Common myeloid progenitor, CD34-positive (primary cell): ENCODE measurements at regions of chr3 and their contacts with region 1.

Region 1: GRCh38 chr3:140128631-140129030 is 193.6 kb downstream of the CLSTN2 start:
- DNase-seq: peak; percentile 27 to 61 (median 44)
- H3K4me3 ChIP-seq: peak overlapping the region in 1 of 7 experiments; percentile 11
- H3K27ac ChIP-seq: peak overlapping the region in 1 of 2 experiments; percentile 12
- H3K4me1 ChIP-seq: peaks cover 0 to 23% (median 8%) of the 10 kb centered on the region in 4 experiments
- H3K27me3 ChIP-seq: no peaks in the 10 kb centered on the region

Region 2: GRCh38 chr3:139157161-139157932 is 971.3 kb before region 1 on chr3:
- CTCF ChIA-PET with region 1: no interaction called
- POLR2A ChIA-PET with region 1: no interaction called
- DNase-seq: no peak
- H3K4me3 ChIP-seq: no peak overlapping the region
- H3K27ac ChIP-seq: no peak overlapping the region
- H3K4me1 ChIP-seq: no peaks in the 10 kb centered on the region
- H3K27me3 ChIP-seq: peaks cover 0 to 10% (median 2%) of the 10 kb centered on the region in 5 experiments

Region 3: GRCh38 chr3:140117096-140117526 is 11.5 kb before region 1 on chr3:
- CTCF ChIA-PET with region 1: interaction called, 10 read pairs
- POLR2A ChIA-PET with region 1: no interaction called
- DNase-seq: no peak
- H3K4me3 ChIP-seq: no peak overlapping the region
- H3K27ac ChIP-seq: no peak overlapping the region
- H3K4me1 ChIP-seq: no peaks in the 10 kb centered on the region
- H3K27me3 ChIP-seq: peaks cover 0 to 5% (median 0%) of the 10 kb centered on the region in 5 experiments

Region 4: DNA sequence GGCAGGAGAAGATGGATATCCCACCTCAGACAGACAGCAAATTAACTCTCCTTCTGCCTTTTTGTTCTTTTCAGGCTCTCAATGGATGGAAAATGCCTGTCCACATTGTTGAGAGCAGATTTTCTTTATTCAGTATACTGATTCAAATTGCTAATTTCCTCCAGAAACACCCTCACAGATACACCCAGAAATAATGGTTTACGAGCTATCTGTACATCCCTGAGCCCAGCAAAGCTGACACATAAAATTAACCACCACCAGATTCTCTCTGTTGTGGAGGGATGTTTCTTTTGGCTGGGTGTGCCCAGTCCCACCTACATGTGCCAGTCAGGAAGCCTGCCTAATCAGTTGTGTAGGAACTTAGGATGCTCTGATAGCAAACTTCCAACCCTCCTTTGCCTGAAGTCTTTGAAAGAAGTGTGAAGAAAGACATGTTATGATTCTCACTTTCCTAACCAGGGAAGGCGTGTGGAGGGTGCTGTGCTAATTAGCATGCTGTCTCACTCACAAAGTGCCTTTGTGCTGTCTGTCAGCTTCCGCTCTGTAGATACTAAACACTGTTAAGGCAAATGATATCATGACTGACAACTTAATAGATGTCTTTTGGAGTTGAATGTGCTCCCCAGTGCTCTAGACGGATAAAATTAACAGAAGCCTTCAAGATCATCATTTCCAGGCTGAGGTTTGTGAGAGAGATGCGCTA is 14.9 kb after region 1 on chr3:
- CTCF ChIA-PET with region 1: interaction called, 13 read pairs
- POLR2A ChIA-PET with region 1: no interaction called
- DNase-seq: no peak
- H3K4me3 ChIP-seq: no peak overlapping the region
- H3K27ac ChIP-seq: no peak overlapping the region
- H3K4me1 ChIP-seq: no peaks in the 10 kb centered on the region
- H3K27me3 ChIP-seq: no peaks in the 10 kb centered on the region

Region 5: DNA sequence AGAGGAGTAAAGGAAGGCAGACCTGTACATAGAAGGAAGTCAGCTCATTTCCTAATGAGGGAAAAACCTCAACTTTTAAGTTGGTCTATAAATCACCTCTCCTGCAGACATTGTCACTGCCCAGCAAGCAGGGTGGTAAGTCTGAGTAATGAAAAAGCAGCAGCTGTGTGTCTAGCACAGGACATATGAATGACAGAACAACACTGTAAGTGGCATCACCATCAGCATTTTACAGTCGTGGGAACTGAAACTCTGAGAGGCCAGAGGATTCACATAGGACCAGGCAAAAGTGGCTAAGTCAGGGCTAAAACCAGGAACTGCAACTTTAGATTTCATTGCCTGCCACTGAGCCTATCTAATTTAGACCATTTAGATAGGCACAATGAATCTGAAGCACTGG is 42.0 kb after region 1 on chr3:
- CTCF ChIA-PET with region 1: no interaction called
- POLR2A ChIA-PET with region 1: no interaction called
- DNase-seq: peak in 2 of 3 donors; percentile 24 to 25
- H3K4me3 ChIP-seq: no peak overlapping the region
- H3K27ac ChIP-seq: no peak overlapping the region
- H3K4me1 ChIP-seq: peaks cover 0 to 8% (median 0%) of the 10 kb centered on the region in 4 experiments
- H3K27me3 ChIP-seq: no peaks in the 10 kb centered on the region